ENCODE measurements at regions of chr2 and their contacts with region 1.

Region 1: GRCh38 chr2:218257390-218257981 is 3.3 kb upstream of the GPBAR1 start:
- DNase-seq: peak; percentile 66
- H3K4me3 Mint-ChIP-seq: no peak overlapping the region
- H3K27ac Mint-ChIP-seq: peak overlapping the region; percentile 88
- H3K4me1 Mint-ChIP-seq: peaks cover 27% of the 10 kb centered on the region
- H3K27me3 Mint-ChIP-seq: no peaks in the 10 kb centered on the region

Region 2: DNA sequence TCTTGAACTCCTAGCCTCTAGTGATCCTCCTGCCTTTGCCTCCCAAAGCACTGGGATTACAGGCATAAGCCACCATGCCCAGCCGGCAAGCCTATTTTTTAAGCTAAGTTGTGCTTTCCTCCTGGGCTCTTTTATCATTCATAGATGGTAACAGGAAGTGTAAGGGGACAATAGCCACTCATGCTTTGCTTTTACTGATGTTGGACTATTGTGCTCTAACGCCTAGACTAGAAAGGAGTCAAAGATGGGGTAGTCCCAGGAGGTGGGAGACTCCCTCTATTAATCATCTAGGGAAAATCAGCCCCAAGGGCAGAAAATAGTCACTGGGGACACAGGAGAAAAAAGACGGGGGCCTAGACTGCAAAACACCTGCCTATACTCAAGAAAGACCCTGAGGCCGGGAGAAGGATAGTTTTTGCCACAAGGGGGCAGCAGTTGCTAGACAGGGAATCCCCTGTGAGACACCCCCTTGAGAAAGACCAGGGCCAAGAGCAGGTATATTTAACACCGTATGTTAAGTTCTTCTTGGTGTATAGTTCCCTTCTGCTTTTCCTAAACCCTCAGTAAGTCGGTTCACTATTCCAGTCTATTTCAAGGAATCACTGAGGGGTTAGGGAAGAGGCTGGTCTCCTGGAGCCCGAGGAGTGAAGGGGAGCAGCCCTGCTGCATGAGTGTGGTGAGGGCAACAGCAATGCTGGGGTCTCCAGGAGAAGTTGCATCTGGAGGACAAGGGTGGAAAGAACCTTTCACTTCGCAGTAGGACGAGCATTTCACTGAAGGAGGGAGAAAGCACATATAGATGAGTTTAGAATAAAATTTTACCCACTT is 88.6 kb before region 1 on chr2:
- CTCF ChIA-PET with region 1: interaction called, 11 read pairs
- DNase-seq: peak; percentile 73
- H3K4me3 Mint-ChIP-seq: no peak overlapping the region
- H3K27ac Mint-ChIP-seq: no peak overlapping the region
- H3K4me1 Mint-ChIP-seq: peaks cover 42% of the 10 kb centered on the region
- H3K27me3 Mint-ChIP-seq: peaks cover 64% of the 10 kb centered on the region

Region 3: DNA sequence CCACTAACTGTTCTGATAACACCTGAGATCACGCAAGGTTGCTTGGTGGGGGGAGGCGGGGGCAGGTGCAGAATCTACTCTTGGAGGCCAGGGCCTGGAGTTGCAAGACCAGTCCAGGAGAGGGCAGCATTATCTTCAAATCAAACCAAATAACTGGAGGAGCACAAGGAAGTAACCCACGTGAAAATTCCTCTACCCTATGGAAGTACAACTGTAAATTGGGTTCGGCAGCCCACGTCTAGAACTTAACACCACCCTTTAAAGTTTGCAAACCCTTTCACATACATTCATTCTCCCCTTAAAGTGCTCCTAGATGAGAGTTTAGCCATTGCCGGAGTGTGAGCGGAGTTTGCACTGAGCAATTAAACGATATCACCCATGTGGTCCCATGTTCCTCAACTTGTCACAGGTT is 71.1 kb before region 1 on chr2:
- CTCF ChIA-PET with region 1: interaction called, 52 read pairs
- DNase-seq: peak; percentile 81
- H3K4me3 Mint-ChIP-seq: no peak overlapping the region
- H3K27ac Mint-ChIP-seq: no peak overlapping the region
- H3K4me1 Mint-ChIP-seq: peaks cover 10% of the 10 kb centered on the region
- H3K27me3 Mint-ChIP-seq: peaks cover 33% of the 10 kb centered on the region

Region 4: DNA sequence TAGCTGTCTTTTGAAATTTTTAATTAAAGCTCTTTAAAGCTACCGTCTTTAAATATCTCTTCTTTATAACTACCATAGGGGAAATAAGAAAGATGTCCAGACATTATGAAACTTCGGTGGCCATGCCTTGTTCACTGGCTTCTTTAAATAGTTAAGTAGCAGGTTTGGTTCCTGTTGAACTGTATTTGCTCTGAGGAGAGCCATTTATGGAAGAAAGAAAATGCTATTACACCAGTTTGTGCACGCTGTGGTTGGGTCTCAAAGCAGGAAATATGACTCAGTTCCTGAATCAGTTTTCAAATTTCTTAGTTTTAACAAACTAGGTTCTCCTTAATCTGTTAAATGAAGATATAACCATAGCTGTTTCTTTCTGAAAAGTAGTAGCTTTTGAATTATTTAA is 28.2 kb before region 1 on chr2:
- CTCF ChIA-PET with region 1: interaction called, 19 read pairs
- DNase-seq: peak; percentile 63
- H3K4me3 Mint-ChIP-seq: peak overlapping the region; percentile 69
- H3K27ac Mint-ChIP-seq: peak overlapping the region; percentile 95
- H3K4me1 Mint-ChIP-seq: peaks cover 88% of the 10 kb centered on the region
- H3K27me3 Mint-ChIP-seq: no peaks in the 10 kb centered on the region

Region 5: DNA sequence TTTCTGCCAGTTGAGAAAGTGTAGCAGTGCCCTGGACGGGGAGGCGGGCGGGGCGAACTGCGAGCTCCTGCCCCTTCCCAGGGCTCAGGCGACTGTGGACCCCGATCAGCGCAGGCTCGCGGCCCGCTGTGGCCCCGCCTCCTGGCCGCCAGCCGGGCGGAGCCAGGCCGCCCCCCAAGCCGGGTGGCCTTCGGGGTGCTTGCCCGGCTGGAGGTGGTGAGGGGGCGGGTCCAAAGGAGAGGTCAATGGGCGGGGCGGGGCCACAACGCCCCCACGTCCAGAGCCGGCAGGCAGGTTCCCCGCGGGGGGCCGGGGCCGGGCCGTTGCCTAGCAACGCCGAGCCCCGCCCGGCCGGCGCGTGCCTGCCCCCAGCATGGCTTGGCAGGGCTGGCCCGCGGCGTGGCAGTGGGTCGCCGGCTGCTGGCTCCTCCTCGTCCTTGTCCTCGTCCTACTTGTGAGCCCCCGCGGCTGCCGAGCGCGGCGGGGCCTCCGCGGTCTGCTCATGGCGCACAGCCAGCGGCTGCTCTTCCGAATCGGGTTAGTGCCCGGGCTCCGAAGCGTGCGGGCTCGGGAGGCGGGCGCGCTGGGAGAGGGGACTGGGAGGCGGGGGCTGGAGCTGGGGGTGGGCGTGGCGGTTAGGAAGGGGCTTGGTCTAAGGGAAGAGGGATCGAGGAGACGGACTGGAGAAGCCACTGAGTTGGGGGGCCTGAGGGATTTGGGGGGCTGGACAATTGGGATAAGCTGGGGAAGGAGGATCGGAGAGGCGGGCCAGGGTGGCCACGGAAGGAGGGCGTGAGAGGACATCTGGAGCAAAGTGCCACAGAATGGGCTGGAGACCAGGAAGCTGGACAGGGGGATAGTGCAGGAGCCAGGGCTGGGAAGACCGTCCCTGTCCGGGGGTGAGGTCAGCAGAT is 65.7 kb after region 1 on chr2:
- CTCF ChIA-PET with region 1: no interaction called
- DNase-seq: peak; percentile 67
- H3K4me3 Mint-ChIP-seq: peak overlapping the region; percentile 70
- H3K27ac Mint-ChIP-seq: no peak overlapping the region
- H3K4me1 Mint-ChIP-seq: peaks cover 44% of the 10 kb centered on the region
- H3K27me3 Mint-ChIP-seq: peaks cover 35% of the 10 kb centered on the region